GM10248 (cell line): ENCODE measurements at regions of chr3 and their contacts with region 1.

Region 1: GRCh38 chr3:14431892-14432834 is 29.8 kb downstream of the SLC6A6 start:
- DNase-seq: peak; percentile 93
- CTCF ChIP-seq: no peak

Region 2: GRCh38 chr3:14418296-14419250 is 13.6 kb before region 1 on chr3:
- CTCF ChIA-PET with region 1: interaction called, 32 read pairs
- POLR2A ChIA-PET with region 1: interaction called, 4 read pairs
- DNase-seq: no peak
- CTCF ChIP-seq: no peak

Region 3: DNA sequence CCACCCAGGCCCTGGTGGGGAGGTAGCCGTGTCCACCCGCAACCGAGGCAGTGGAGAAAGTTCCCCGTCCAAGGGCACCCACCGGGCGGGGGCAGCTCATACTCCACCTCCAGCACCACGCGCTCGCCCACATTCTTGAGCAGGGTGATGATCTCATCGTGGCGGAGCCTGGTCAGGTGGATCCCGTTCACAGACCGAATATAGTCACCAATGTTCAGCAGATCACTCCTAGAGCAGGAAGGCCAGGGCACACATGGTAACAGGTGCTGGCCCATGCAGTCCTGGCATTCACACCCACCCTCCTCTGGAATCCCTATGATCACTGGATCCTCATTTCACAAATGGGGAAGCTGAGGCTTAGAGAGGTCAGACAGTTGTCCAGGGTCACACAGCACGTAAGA is 92.1 kb after region 1 on chr3:
- CTCF ChIA-PET with region 1: no interaction called
- POLR2A ChIA-PET with region 1: no interaction called
- DNase-seq: no peak
- CTCF ChIP-seq: no peak